PC-9 (cell line): ENCODE measurements at regions of chr20 and their contacts with region 1.

Region 1: DNA sequence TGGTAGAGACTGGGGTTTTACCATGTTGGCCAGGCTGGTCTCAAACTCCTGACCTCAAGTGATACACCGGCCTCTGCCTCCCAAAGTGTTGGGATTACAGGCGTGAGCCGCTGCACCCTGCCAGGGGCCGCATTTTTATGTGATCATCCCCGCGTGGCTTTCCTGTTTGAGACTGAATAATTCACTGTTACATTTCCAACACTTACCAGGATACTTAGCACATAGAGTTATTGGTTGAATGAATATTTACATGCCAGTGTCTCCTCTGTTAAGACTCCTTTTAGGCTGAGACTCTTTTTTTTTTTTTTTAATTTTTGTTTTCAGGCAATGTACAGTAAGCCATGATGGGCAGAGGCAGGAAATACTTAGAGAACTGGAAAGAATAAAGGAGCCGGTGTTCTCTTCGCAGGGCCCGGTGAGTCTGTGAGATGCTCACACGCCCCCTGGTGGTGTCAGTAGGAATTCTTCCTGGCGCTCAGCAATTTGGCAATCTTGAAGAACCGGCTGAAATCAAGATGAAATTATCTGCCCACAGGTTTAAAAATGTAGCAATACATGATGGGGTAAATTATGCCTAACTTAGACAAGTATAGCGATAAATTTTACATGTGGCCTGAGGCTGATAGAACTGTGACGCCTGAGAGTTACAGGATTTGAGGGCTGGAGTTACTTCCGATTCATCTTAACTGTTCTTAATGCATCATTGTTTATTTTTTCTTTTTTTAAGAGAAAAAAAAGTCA is 7.6 kb upstream of the RNF114 start:
- DNase-seq: peak; percentile 86 to 89
- H3K4me3 ChIP-seq: no peak overlapping the region
- H3K27ac ChIP-seq: peak overlapping the region; percentile 53
- H3K4me1 ChIP-seq: peaks cover 13% of the 10 kb centered on the region; the same call in 1 of the 2 replicates
- H3K27me3 ChIP-seq: no peaks in the 10 kb centered on the region
- CTCF ChIP-seq: peak; percentile 98

Region 2: DNA sequence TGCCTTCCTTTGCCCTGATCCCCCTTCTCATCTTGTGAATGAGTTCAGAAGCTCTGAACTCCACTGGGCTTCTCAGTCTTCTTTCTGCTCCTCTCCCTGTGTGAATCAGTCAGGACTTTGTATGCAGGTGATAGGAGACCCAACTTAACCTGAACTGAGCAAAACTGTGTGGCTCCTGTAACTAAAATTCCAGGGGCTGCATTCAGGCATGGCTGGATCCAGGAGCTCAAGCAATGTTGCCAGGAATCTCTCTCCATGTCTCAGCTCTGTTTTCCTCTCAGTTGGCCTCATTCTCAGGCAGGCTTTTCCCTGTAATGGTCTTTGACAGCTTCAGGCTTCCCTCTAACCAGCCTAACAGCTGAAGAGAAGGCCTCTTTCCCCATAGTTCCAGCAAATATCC is 599.8 kb before region 1 on chr20:
- CTCF ChIA-PET with region 1: no interaction called
- POLR2A ChIA-PET with region 1: no interaction called
- intact Hi-C with region 1: loop called (anchors 5 kb)
- DNase-seq: no peak
- H3K4me3 ChIP-seq: no peak overlapping the region
- H3K27ac ChIP-seq: no peak overlapping the region
- H3K4me1 ChIP-seq: no peaks in the 10 kb centered on the region
- H3K27me3 ChIP-seq: peaks cover 40% of the 10 kb centered on the region
- CTCF ChIP-seq: no peak

Region 3: DNA sequence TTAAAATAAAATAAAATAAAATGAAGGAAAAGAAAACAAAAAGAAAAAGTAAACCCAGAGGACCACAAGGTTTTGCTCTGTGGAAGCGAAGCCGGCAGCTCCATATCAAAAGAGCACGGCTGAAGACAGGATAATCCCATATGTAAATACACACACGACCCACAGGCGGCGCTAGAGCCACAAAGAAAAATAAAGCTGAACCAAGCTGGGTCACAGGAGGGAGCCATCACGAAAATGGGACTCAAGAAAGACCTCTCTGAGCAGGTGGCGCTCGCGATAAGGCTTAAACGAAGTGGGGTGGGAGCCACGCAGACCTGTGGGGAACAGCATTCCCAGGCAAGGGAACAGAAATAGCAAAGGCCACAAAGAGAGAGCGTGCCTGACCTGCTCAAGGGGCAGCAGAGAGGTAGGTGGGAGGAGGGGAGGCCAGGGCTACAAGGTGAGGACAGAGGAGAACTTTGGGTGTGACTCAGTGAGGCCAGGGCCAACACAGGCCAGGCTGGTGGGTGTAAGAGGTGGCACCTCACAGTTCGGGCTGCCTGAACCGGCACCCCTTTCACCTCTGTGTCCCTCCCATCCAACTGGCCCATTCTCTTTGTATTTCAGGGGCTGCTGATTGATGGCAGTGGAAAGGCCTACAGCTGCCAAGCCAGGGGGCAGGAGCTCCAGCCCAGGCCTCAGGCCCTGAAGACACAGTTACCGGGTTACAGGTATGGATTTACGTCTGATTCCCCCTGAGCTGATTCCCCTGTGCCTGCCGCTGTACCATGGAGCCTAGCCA is 386.6 kb before region 1 on chr20:
- CTCF ChIA-PET with region 1: interaction called, 4 read pairs
- POLR2A ChIA-PET with region 1: no interaction called
- intact Hi-C with region 1: loop called (anchors 5 kb)
- DNase-seq: peak; percentile 74 to 81
- H3K4me3 ChIP-seq: no peak overlapping the region
- H3K27ac ChIP-seq: peak overlapping the region; percentile 41
- H3K4me1 ChIP-seq: peaks cover 23% of the 10 kb centered on the region
- H3K27me3 ChIP-seq: no peaks in the 10 kb centered on the region
- CTCF ChIP-seq: peak; percentile 100

Region 4: GRCh38 chr20:49888345-49888966 is 40.1 kb before region 1 on chr20:
- CTCF ChIA-PET with region 1: no interaction called
- POLR2A ChIA-PET with region 1: interaction called, 5 read pairs
- intact Hi-C with region 1: loop called (anchors 1 kb)
- DNase-seq: peak; percentile 79 to 89
- H3K4me3 ChIP-seq: no peak overlapping the region
- H3K27ac ChIP-seq: peak overlapping the region; percentile 49
- H3K4me1 ChIP-seq: peaks cover 44% of the 10 kb centered on the region
- H3K27me3 ChIP-seq: no peaks in the 10 kb centered on the region
- CTCF ChIP-seq: peak; percentile 99

Region 5: GRCh38 chr20:49915378-49916145 is 13.0 kb before region 1 on chr20 and contains the start of gene SPATA2:
- CTCF ChIA-PET with region 1: interaction called, 9 read pairs
- POLR2A ChIA-PET with region 1: no interaction called
- intact Hi-C with region 1: loop called (anchors 1 kb)
- DNase-seq: peak; percentile 90 to 93
- H3K4me3 ChIP-seq: peak within 1 kb of the TSS; percentile 90
- H3K27ac ChIP-seq: peak within 1 kb of the TSS; percentile 96
- H3K4me1 ChIP-seq: peaks cover 32% of the 10 kb centered on the region
- H3K27me3 ChIP-seq: no peaks in the 10 kb centered on the region
- CTCF ChIP-seq: no peak; the same call in 1 of the 2 replicates
- total RNA-seq, gene SPATA2: 7.3 and 10.9 TPM in 2 replicates

Region 6: GRCh38 chr20:50003253-50003656 is 74.7 kb after region 1 on chr20:
- CTCF ChIA-PET with region 1: no interaction called
- POLR2A ChIA-PET with region 1: no interaction called
- intact Hi-C with region 1: no loop called
- DNase-seq: peak in 1 of 2 experiments; percentile 60
- H3K4me3 ChIP-seq: no peak overlapping the region
- H3K27ac ChIP-seq: no peak overlapping the region
- H3K4me1 ChIP-seq: 0 out of 2 replicates have a peak, but pooled peaks cover 8% of the 10 kb centered on the region
- H3K27me3 ChIP-seq: no peaks in the 10 kb centered on the region
- CTCF ChIP-seq: no peak